PC-9 (cell line): ENCODE measurements at regions of chr6 and their contacts with region 1.

Region 1: GRCh38 chr6:145332001-145332400 is 403.3 kb downstream of the EPM2A start:
- DNase-seq: peak in 1 of 2 experiments; percentile 37
- H3K4me3 ChIP-seq: no peak overlapping the region
- H3K27ac ChIP-seq: no peak overlapping the region
- H3K4me1 ChIP-seq: no peaks in the 10 kb centered on the region; the same call in 1 of the 2 replicates
- H3K27me3 ChIP-seq: no peaks in the 10 kb centered on the region
- CTCF ChIP-seq: no peak

Region 2: GRCh38 chr6:145075425-145075824 is 256.6 kb before region 1 on chr6:
- CTCF ChIA-PET with region 1: no interaction called
- POLR2A ChIA-PET with region 1: no interaction called
- intact Hi-C with region 1: no loop called
- DNase-seq: no peak
- H3K4me3 ChIP-seq: no peak overlapping the region
- H3K27ac ChIP-seq: no peak overlapping the region
- H3K4me1 ChIP-seq: no peaks in the 10 kb centered on the region
- H3K27me3 ChIP-seq: no peaks in the 10 kb centered on the region
- CTCF ChIP-seq: peak; percentile 40; the same call in 1 of the 2 replicates

Region 3: GRCh38 chr6:145241039-145241438 is 91.0 kb before region 1 on chr6:
- CTCF ChIA-PET with region 1: no interaction called
- POLR2A ChIA-PET with region 1: interaction called, 13 read pairs
- intact Hi-C with region 1: no loop called
- DNase-seq: peak in 1 of 2 experiments; percentile 36
- H3K4me3 ChIP-seq: no peak overlapping the region
- H3K27ac ChIP-seq: peak overlapping the region; percentile 17; the same call in 1 of the 2 replicates
- H3K4me1 ChIP-seq: peaks cover 13% of the 10 kb centered on the region; the same call in 1 of the 2 replicates
- H3K27me3 ChIP-seq: no peaks in the 10 kb centered on the region
- CTCF ChIP-seq: no peak

Region 4: GRCh38 chr6:145349950-145350510 is 18.0 kb after region 1 on chr6:
- CTCF ChIA-PET with region 1: no interaction called
- POLR2A ChIA-PET with region 1: no interaction called
- intact Hi-C with region 1: no loop called
- DNase-seq: no peak
- H3K4me3 ChIP-seq: no peak overlapping the region
- H3K27ac ChIP-seq: no peak overlapping the region
- H3K4me1 ChIP-seq: no peaks in the 10 kb centered on the region
- H3K27me3 ChIP-seq: no peaks in the 10 kb centered on the region
- CTCF ChIP-seq: no peak